ENCODE measurements at regions of chr6 and their contacts with region 1.

Region 1: DNA sequence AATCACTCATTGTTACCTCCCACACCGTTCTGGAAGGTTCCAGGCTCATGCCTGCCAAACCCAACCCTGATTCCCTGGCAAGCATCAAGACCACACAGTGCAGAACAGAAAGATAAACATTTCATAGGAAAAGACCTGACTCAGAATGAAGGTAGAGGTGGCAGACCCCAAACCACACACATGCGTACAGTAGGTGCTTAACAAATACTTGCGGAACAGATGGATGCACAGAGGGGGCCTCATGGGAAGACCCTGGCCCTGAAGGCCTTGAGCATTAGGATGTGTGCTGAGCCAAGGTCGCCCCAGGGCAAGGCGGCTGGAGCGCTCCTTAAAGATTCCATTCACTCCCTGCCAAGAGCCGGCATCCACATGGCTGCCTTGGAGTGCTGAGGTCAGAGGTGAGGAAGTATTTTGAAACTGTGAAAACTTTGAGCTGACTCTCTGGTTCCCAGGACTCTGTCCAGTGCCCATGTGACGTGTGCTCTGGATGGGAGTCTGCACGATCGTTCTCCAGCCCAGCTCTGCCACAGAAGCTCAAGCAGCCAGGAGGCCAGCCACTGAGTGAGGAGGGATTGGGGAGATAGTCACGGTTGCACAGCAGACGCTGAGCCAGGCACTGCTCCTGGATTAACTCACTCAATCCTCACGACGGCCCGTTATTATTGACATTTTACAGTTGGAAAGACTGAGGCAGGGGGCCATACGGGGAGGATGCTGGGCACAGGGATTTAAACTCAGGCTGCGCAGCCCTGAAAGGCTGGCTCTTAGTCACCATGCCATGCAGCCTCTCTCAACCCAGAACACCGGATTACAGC is 65.5 kb upstream of the AFDN start:
- DNase-seq: peak; percentile 85
- ATAC-seq: peak; percentile 74
- H3K4me3 ChIP-seq: peak overlapping the region; percentile 23 to 68 (median 50); a peak in 5 of 6 replicates
- H3K27ac ChIP-seq: peak overlapping the region; percentile 97
- H3K4me1 ChIP-seq: peaks cover 82% of the 10 kb centered on the region
- H3K27me3 ChIP-seq: no peaks in the 10 kb centered on the region
- CTCF ChIP-seq: no peak
- EP300 ChIP-seq: peak in 1 of 2 experiments; percentile 61; a peak in 1 of 4 replicates
- POLR2A ChIP-seq: peak; percentile 72 to 82
- RAD21 ChIP-seq: no peak

Region 2: GRCh38 chr6:167683028-167683862 is 77.9 kb before region 1 on chr6:
- CTCF ChIA-PET with region 1: no interaction called
- POLR2A ChIA-PET with region 1: interaction called, 30 read pairs
- in situ Hi-C with region 1: no loop called
- intact Hi-C with region 1: loop called (anchors 1 kb)
- DNase-seq: peak; percentile 100
- ATAC-seq: peak; percentile 93
- H3K4me3 ChIP-seq: peak overlapping the region in 1 of 3 experiments; percentile 35; a peak in 2 of 6 replicates
- H3K27ac ChIP-seq: peak overlapping the region; percentile 96
- H3K4me1 ChIP-seq: peaks cover 77% of the 10 kb centered on the region
- H3K27me3 ChIP-seq: no peaks in the 10 kb centered on the region
- CTCF ChIP-seq: peak; percentile 33
- EP300 ChIP-seq: peak; percentile 99
- POLR2A ChIP-seq: peak in 1 of 2 experiments; percentile 42; a peak in 2 of 4 replicates
- RAD21 ChIP-seq: peak; percentile 70; the same call in 1 of the 2 replicates

Region 3: GRCh38 chr6:167742719-167743303 is 18.4 kb before region 1 on chr6:
- CTCF ChIA-PET with region 1: no interaction called
- POLR2A ChIA-PET with region 1: interaction called, 27 read pairs
- in situ Hi-C with region 1: no loop called
- intact Hi-C with region 1: loop called (anchors 1 kb)
- DNase-seq: peak; percentile 97
- ATAC-seq: peak; percentile 100
- H3K4me3 ChIP-seq: no peak overlapping the region
- H3K27ac ChIP-seq: peak overlapping the region; percentile 52
- H3K4me1 ChIP-seq: peaks cover 35% of the 10 kb centered on the region
- H3K27me3 ChIP-seq: no peaks in the 10 kb centered on the region
- CTCF ChIP-seq: peak; percentile 83
- EP300 ChIP-seq: peak in 1 of 2 experiments; percentile 74; a peak in 2 of 4 replicates
- POLR2A ChIP-seq: no peak
- RAD21 ChIP-seq: peak; percentile 80

Region 4: DNA sequence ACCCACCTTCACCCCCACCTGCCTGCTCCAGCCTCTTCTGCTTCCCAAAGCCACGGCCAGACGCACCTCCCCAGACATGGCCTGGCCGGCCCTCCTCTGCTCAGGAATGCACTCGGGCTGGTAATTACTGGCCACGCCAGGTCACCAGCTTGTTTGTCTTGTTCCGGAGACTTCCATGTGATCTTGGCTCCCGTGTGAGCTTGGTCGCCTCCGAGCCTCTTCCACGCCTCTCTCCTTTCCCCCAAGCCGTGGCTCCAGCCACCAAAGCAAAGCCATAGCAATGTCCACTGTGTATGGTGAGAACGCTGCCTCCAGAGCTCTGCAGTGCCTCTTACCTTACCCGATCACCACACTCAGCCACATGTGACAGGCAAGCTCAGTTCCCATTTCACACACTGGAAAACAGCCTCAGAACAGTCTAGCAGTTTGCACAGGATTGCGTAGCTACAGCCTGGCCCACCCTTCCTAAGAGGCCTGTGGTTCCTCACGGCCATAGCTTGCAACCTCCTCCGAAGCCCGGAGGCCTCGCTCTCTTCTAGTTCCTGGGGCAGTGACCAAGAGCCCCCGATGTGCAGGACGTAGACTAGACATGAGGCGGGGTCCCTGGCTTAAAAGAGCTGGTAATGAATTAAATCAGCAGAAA is 17.4 kb after region 1 on chr6:
- CTCF ChIA-PET with region 1: no interaction called
- POLR2A ChIA-PET with region 1: interaction called, 11 read pairs
- in situ Hi-C with region 1: no loop called
- intact Hi-C with region 1: no loop called
- DNase-seq: no peak
- ATAC-seq: peak; percentile 43
- H3K4me3 ChIP-seq: peak overlapping the region in 1 of 3 experiments; percentile 32; a peak in 1 of 6 replicates
- H3K27ac ChIP-seq: no peak overlapping the region
- H3K4me1 ChIP-seq: peaks cover 48% of the 10 kb centered on the region
- H3K27me3 ChIP-seq: no peaks in the 10 kb centered on the region; a peak in 1 of 5 replicates
- CTCF ChIP-seq: no peak
- EP300 ChIP-seq: no peak
- POLR2A ChIP-seq: no peak
- RAD21 ChIP-seq: no peak

Region 5: DNA sequence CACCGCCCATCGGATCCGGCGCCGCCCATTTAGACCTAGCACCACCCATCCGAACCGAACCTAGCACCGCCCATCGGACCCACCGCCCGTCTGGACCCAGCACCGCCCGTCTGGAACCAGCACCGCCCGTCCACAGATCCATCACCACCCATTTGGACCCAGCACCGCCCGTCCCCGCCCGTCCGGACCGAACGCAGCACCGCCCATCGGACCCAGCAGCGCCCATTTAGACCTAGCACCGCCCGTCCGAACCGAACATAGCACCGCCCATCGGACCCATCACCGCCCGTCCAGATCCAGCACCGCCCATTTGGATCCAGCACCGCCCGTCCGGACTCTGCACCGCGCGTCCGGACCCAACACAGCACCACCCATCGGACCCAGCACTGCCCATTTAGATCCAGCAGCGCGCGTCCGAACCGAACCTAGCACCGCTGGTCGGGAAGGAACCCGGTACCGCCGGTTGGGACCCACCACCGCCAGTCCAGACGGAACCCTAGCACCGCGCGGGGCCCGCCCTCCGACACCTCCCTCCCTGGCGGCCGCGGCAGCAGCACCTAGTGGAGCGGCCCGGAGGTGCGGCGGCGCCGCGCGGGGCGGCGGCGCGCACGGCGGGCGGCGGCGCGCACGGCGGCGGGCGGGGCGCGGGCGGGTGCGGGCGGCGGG is 65.2 kb after region 1 on chr6:
- CTCF ChIA-PET with region 1: no interaction called
- POLR2A ChIA-PET with region 1: interaction called, 9 read pairs
- in situ Hi-C with region 1: no loop called
- intact Hi-C with region 1: loop called (anchors 5 kb)
- DNase-seq: no peak
- ATAC-seq: peak; percentile 86
- H3K4me3 ChIP-seq: peak overlapping the region; percentile 79 to 100 (median 93)
- H3K27ac ChIP-seq: peak overlapping the region; percentile 63
- H3K4me1 ChIP-seq: peaks cover 36% of the 10 kb centered on the region
- H3K27me3 ChIP-seq: no peaks in the 10 kb centered on the region; a peak in 1 of 5 replicates
- CTCF ChIP-seq: peak; percentile 66
- EP300 ChIP-seq: 0 out of 4 replicates have a peak, but pooled peaks of 1 of the 2 experiments have one; percentile 7
- POLR2A ChIP-seq: peak in 1 of 2 experiments; percentile 68; a peak in 2 of 4 replicates
- RAD21 ChIP-seq: peak; percentile 89